Activated T-helper 1 cell treated with anti-CD3 and anti-CD28 coated beads, Interleukin-12 subunit alpha, Interleukin-12 subunit beta, Interleukin-2, Interleukin-4 antibody, amounts not matched to agents 30 ng/mL and 10 ng/mL and 1 ng/mL, durations not matched to agents 14 hours and 24 hours and 36 hours (primary cell): ENCODE measurements at regions of chr1 and their contacts with region 1.

Region 1: GRCh38 chr1:19882111-19883071 is at the start of gene OTUD3:
- DNase-seq: peak; percentile 95
- H3K4me3 Mint-ChIP-seq: peak within 1 kb of the TSS; percentile 90
- H3K27ac Mint-ChIP-seq: peak within 1 kb of the TSS; percentile 52
- H3K4me1 Mint-ChIP-seq: peaks cover 31% of the 10 kb centered on the region
- H3K27me3 Mint-ChIP-seq: peaks cover 2% of the 10 kb centered on the region
- total RNA-seq, gene OTUD3: 10.2 and 16.1 TPM in 2 replicates

Region 2: DNA sequence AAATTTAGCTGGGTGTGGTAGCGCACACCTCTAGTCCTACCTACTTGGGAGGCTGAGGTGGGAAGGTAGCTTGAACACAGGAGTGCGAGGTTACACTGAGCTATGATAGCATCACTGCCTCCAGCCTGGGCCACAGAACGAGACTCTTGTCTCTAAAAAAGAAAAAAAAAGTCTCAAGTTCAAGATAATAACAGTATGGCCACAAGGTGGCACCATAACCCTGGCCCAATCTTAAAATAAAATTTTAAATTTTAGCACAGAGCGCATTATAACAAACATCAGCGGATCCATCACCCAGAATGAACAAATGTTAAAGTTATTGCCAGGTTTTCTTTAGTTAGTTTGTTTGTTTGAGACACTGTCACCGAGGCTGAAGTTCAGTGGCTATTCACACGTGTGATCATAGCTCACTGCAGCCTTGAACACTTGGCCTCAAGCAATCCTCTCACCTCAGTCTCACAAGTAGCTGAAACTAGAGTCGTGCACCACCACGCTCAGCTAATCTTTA is 220.6 kb before region 1 on chr1:
- intact Hi-C with region 1: loop called (anchors 5 kb)
- DNase-seq: no peak
- H3K4me3 Mint-ChIP-seq: no peak overlapping the region
- H3K27ac Mint-ChIP-seq: no peak overlapping the region
- H3K4me1 Mint-ChIP-seq: peaks cover 12% of the 10 kb centered on the region
- H3K27me3 Mint-ChIP-seq: peaks cover 41% of the 10 kb centered on the region

Region 3: GRCh38 chr1:19762175-19762779 is 120.1 kb before region 1 on chr1:
- intact Hi-C with region 1: loop called (anchors 10 kb)
- DNase-seq: no peak
- H3K4me3 Mint-ChIP-seq: no peak overlapping the region
- H3K27ac Mint-ChIP-seq: no peak overlapping the region
- H3K4me1 Mint-ChIP-seq: peaks cover 18% of the 10 kb centered on the region
- H3K27me3 Mint-ChIP-seq: no peaks in the 10 kb centered on the region

Region 4: GRCh38 chr1:20151906-20152598 is 269.7 kb after region 1 on chr1:
- intact Hi-C with region 1: loop called (anchors 1 kb)
- DNase-seq: peak; percentile 69
- H3K4me3 Mint-ChIP-seq: peak overlapping the region; percentile 73
- H3K27ac Mint-ChIP-seq: peak overlapping the region; percentile 20
- H3K4me1 Mint-ChIP-seq: peaks cover 17% of the 10 kb centered on the region
- H3K27me3 Mint-ChIP-seq: no peaks in the 10 kb centered on the region

Region 5: DNA sequence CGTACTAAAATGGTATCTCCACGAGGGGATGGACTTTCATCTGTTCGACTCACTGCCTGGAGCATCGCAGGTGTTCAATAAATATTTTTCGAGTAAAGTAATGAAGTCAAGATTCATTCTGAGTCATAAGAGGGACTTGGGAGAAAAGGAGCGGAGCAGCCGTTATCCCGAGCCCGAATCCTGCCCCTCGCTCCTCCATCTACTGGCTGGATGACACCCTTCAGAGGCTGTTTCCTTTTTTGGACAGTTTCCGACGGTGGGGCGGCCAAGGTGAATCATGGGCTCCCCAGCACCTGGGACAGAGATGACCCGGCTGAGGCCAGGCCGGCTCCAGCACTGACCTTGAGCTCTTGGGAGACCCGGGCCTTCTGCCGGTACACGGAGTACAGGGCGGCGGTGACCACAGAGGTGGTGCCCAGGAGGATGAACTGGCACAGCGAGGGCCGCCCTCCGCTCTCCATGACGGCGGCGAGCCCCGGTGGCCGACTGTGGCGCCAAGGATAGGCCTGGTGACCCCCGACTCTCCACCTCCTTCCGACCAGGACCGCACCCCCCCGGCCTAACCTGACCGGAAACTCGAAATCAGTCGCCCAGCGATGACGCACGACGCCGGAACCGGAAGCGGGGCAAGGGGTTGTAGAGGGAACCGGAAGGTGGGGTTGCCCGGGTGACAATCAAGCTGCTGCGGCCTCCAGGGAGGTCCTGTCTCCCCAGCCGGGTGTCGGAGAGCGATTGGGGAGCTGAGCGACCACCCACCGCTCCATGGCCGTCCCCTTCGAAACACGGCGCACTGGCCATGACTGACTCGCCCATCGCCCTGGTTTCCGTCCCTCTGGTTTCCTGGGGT is 625.4 kb after region 1 on chr1 and contains the start of gene MUL1:
- intact Hi-C with region 1: loop called (anchors 1 kb)
- DNase-seq: peak; percentile 91
- H3K4me3 Mint-ChIP-seq: peak within 1 kb of the TSS; percentile 93
- H3K27ac Mint-ChIP-seq: peak within 1 kb of the TSS; percentile 93
- H3K4me1 Mint-ChIP-seq: peaks cover 11% of the 10 kb centered on the region
- H3K27me3 Mint-ChIP-seq: peaks cover 4% of the 10 kb centered on the region
- total RNA-seq, gene MUL1: 22.0 and 22.8 TPM in 2 replicates